Naive thymus-derived CD8-positive, alpha-beta T cell (primary cell): ENCODE measurements at regions of chr6 and their contacts with region 1.

Region 1: GRCh38 chr6:131255924-131256323 is 120.7 kb downstream of the AKAP7 start:
- DNase-seq: no peak
- ATAC-seq: no peak
- H3K4me3 Mint-ChIP-seq: peak overlapping the region in 3 of 10 donors; percentile 2 to 35 (median 9)
- H3K27ac Mint-ChIP-seq: peak overlapping the region in 7 of 10 donors; percentile 13 to 66 (median 60)
- H3K4me1 Mint-ChIP-seq: peaks cover 27 to 65% (median 51%) of the 10 kb centered on the region in 4 donors
- H3K27me3 Mint-ChIP-seq: no peaks in the 10 kb centered on the region

Region 2: GRCh38 chr6:131265939-131266338 is 10.0 kb after region 1 on chr6:
- POLR2A ChIA-PET with region 1: interaction called, 10 read pairs
- DNase-seq: no peak
- ATAC-seq: no peak
- H3K4me3 Mint-ChIP-seq: no peak overlapping the region
- H3K27ac Mint-ChIP-seq: peak overlapping the region in 6 of 10 donors; percentile 16 to 77 (median 38)
- H3K4me1 Mint-ChIP-seq: peaks cover 7 to 42% (median 20%) of the 10 kb centered on the region in 4 donors
- H3K27me3 Mint-ChIP-seq: no peaks in the 10 kb centered on the region

Region 3: DNA sequence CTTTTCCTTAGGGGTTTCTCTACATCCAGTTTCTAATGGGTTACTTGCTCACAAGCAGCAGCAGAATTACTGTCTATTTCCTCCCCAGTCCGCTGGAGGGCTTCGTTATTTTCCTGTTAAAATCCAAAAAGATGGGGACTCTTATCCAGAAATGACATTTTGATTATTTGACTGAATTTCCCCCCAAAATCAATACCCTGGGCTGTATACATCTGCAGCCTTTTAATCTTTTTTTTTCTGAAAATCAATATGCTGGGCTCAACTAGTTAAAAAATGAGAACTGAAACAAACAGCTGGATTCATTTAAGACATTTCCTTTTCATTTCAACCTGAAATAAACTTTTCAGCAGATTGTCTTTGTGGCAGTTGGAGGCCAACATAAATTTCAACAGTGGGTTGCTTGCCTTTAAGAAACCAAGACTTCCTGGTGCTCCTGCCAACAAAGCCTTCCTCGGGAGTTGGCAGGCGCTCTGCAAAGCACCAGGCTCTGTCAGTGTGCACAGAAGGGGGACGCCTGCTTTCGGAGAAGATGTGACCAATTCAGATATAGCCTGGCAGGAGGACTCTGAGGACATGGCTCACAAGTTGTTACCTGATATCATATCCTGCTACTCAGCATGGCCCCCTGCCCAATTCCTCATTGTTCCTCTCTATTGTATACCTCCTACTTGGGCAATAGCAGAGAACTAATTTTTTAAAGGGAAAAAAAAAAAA is 112.4 kb after region 1 on chr6:
- POLR2A ChIA-PET with region 1: no interaction called
- DNase-seq: no peak
- ATAC-seq: peak in 1 of 2 donors; percentile 28
- H3K4me3 Mint-ChIP-seq: peak overlapping the region in 8 of 10 donors; percentile 8 to 68 (median 34)
- H3K27ac Mint-ChIP-seq: peak overlapping the region; percentile 5 to 85 (median 65)
- H3K4me1 Mint-ChIP-seq: peaks cover 24 to 39% (median 35%) of the 10 kb centered on the region in 4 donors
- H3K27me3 Mint-ChIP-seq: no peaks in the 10 kb centered on the region